GM12878 (cell line): ENCODE measurements at regions of chr17 and their contacts with region 1.

Region 1: GRCh38 chr17:7851438-7852256 is 3.2 kb upstream of the TMEM88 start:
- DNase-seq: peak; percentile 73
- ATAC-seq: peak; percentile 90
- H3K4me3 ChIP-seq: peak overlapping the region; percentile 41; the same call in 1 of the 2 replicates
- H3K27ac ChIP-seq: no peak overlapping the region
- H3K4me1 ChIP-seq: peaks cover 26% of the 10 kb centered on the region
- H3K27me3 ChIP-seq: no peaks in the 10 kb centered on the region
- CTCF ChIP-seq: peak; percentile 95 to 100 (median 98); a peak in 5 of 6 replicates
- EP300 ChIP-seq: no peak
- POLR2A ChIP-seq: peak; percentile 71; the same call in 1 of the 2 replicates
- RAD21 ChIP-seq: peak; percentile 84

Region 2: GRCh38 chr17:7818746-7819645 is 32.7 kb before region 1 on chr17:
- CTCF ChIA-PET with region 1: interaction called, 11 read pairs
- POLR2A ChIA-PET with region 1: no interaction called
- RAD21 ChIA-PET with region 1: no interaction called
- SMC1A ChIA-PET with region 1: interaction called, 8 read pairs
- in situ Hi-C with region 1: no loop called
- intact Hi-C with region 1: loop called (anchors 1 kb)
- DNase-seq: no peak
- ATAC-seq: no peak
- H3K4me3 ChIP-seq: no peak overlapping the region
- H3K27ac ChIP-seq: no peak overlapping the region
- H3K4me1 ChIP-seq: no peaks in the 10 kb centered on the region
- H3K27me3 ChIP-seq: peaks cover 0 to 2% of the 10 kb centered on the region in 2 experiments; a peak in 2 of 4 replicates
- CTCF ChIP-seq: no peak
- EP300 ChIP-seq: no peak
- POLR2A ChIP-seq: no peak
- RAD21 ChIP-seq: no peak

Region 3: GRCh38 chr17:7825206-7825990 is 26.2 kb before region 1 on chr17:
- CTCF ChIA-PET with region 1: interaction called, 18 read pairs
- POLR2A ChIA-PET with region 1: no interaction called
- RAD21 ChIA-PET with region 1: interaction called, 6 read pairs
- SMC1A ChIA-PET with region 1: interaction called, 8 read pairs
- in situ Hi-C with region 1: no loop called
- intact Hi-C with region 1: loop called (anchors 1 kb)
- DNase-seq: no peak
- ATAC-seq: 0 out of 3 replicates have a peak, but pooled peaks have one; percentile 28
- H3K4me3 ChIP-seq: no peak overlapping the region
- H3K27ac ChIP-seq: no peak overlapping the region
- H3K4me1 ChIP-seq: no peaks in the 10 kb centered on the region
- H3K27me3 ChIP-seq: no peaks in the 10 kb centered on the region; a peak in 1 of 4 replicates
- CTCF ChIP-seq: no peak; a peak in 1 of 6 replicates
- EP300 ChIP-seq: no peak
- POLR2A ChIP-seq: no peak
- RAD21 ChIP-seq: no peak

Region 4: GRCh38 chr17:7834962-7835813 is 16.5 kb before region 1 on chr17:
- CTCF ChIA-PET with region 1: interaction called, 57 read pairs
- POLR2A ChIA-PET with region 1: interaction called, 11 read pairs
- RAD21 ChIA-PET with region 1: interaction called, 44 read pairs
- SMC1A ChIA-PET with region 1: interaction called, 14 read pairs
- in situ Hi-C with region 1: no loop called
- intact Hi-C with region 1: loop called (anchors 1 kb)
- DNase-seq: peak; percentile 90
- ATAC-seq: peak; percentile 60
- H3K4me3 ChIP-seq: peak overlapping the region; percentile 100
- H3K27ac ChIP-seq: peak overlapping the region; percentile 76
- H3K4me1 ChIP-seq: peaks cover 21% of the 10 kb centered on the region
- H3K27me3 ChIP-seq: peaks cover 0 to 1% of the 10 kb centered on the region in 2 experiments; a peak in 1 of 4 replicates
- CTCF ChIP-seq: peak; percentile 82 to 87 (median 85)
- EP300 ChIP-seq: peak in 1 of 2 experiments; percentile 35; a peak in 1 of 4 replicates
- POLR2A ChIP-seq: no peak
- RAD21 ChIP-seq: peak; percentile 78